ENCODE measurements at regions of chr6 and their contacts with region 1.

Region 1: DNA sequence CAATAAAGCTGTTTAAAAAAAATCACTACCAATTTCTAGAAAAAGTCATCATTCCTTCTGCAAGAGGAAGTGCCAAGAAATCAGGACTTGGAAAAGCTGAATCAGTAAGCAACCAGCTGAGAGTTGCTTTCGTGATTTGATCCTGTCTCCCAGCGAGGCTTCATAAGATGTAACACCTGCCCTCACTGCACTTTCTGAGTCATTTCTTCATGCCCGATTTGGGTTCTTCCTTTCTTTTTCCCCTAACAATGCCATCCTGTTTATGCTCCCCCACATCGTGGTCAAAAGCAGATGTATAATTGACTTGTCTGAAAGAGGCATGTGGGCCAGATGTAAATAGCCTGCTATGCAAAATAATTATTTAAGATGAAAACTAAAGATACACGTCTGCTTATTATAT is 52.1 kb downstream of the RIPOR2 start:
- DNase-seq: peak; percentile 73
- ATAC-seq: peak; percentile 34
- H3K4me3 ChIP-seq: no peak overlapping the region
- H3K27ac ChIP-seq: peak overlapping the region; percentile 53
- H3K4me1 ChIP-seq: peaks cover 39% of the 10 kb centered on the region
- H3K27me3 ChIP-seq: no peaks in the 10 kb centered on the region
- CTCF ChIP-seq: no peak

Region 2: GRCh38 chr6:24960991-24961475 is 77.4 kb after region 1 on chr6:
- CTCF ChIA-PET with region 1: no interaction called
- POLR2A ChIA-PET with region 1: no interaction called
- intact Hi-C with region 1: loop called (anchors 5 kb)
- DNase-seq: peak; percentile 55
- ATAC-seq: peak; percentile 72
- H3K4me3 ChIP-seq: no peak overlapping the region
- H3K27ac ChIP-seq: no peak overlapping the region
- H3K4me1 ChIP-seq: peaks cover 10% of the 10 kb centered on the region; the same call in 1 of the 2 replicates
- H3K27me3 ChIP-seq: peaks cover 15% of the 10 kb centered on the region; the same call in 1 of the 2 replicates
- CTCF ChIP-seq: no peak